ENCODE measurements at regions of chr13 and their contacts with region 1.

Region 1: DNA sequence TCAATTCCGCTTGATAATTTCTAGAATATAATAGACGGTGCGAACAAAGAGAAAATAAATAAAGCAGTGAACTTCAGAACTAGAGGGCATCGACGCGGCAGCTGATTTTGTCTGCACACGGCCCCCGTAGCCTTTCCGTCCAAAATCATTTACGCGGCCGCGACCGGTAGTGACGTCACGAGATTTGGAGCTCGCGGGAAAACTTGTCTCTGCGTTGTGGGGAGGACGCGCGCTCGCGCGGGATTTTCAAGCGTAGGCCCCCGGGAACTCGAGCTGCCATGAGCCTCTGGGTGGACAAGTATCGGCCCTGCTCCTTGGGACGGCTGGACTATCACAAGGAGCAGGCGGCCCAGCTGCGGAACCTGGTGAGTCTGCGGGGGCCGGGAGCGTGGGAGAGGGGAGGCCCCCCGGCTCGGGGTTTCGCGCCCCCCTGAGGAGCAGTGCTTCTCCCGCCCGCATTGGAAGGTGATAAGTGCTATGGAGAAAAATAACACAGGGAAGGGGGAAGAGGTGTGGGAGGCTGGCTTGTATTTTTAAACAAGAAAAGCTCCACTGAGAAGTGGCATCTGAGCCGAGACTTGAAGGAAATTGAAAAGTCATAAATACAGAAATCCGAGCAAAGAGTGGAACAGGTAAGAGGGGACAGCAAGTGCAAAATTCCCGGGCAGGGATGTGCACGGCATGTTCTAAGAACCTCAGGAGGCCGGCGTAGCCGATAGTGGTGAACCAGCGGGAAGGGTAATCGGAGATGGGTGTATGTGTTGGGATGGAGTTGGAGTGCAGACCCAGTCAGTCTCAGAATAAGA is at the start of gene RFC3:
- DNase-seq: peak; percentile 98
- H3K4me3 Mint-ChIP-seq: peak within 1 kb of the TSS; percentile 93
- H3K27ac Mint-ChIP-seq: peak within 1 kb of the TSS; percentile 95
- H3K4me1 Mint-ChIP-seq: peaks cover 30% of the 10 kb centered on the region
- H3K27me3 Mint-ChIP-seq: no peaks in the 10 kb centered on the region
- total RNA-seq, gene RFC3: 77.8 and 81.0 TPM in 2 replicates

Region 2: GRCh38 chr13:32538621-32539246 is 1279.4 kb before region 1 on chr13 and contains the start of gene N4BP2L2:
- intact Hi-C with region 1: loop called (anchors 10 kb)
- DNase-seq: peak; percentile 97
- H3K4me3 Mint-ChIP-seq: peak within 1 kb of the TSS; percentile 98
- H3K27ac Mint-ChIP-seq: peak within 1 kb of the TSS; percentile 99
- H3K4me1 Mint-ChIP-seq: peaks cover 37% of the 10 kb centered on the region
- H3K27me3 Mint-ChIP-seq: peaks cover 8% of the 10 kb centered on the region
- total RNA-seq, gene N4BP2L2: 87.5 and 88.0 TPM in 2 replicates

Region 3: GRCh38 chr13:33743438-33744368 is 74.4 kb before region 1 on chr13:
- intact Hi-C with region 1: loop called (anchors 1 kb)
- DNase-seq: peak; percentile 70
- H3K4me3 Mint-ChIP-seq: peak overlapping the region; percentile 38
- H3K27ac Mint-ChIP-seq: peak overlapping the region; percentile 83
- H3K4me1 Mint-ChIP-seq: peaks cover 22% of the 10 kb centered on the region
- H3K27me3 Mint-ChIP-seq: no peaks in the 10 kb centered on the region

Region 4: GRCh38 chr13:33828431-33829129 is 10.5 kb after region 1 on chr13:
- intact Hi-C with region 1: loop called (anchors 1 kb)
- DNase-seq: no peak
- H3K4me3 Mint-ChIP-seq: no peak overlapping the region
- H3K27ac Mint-ChIP-seq: peak overlapping the region; percentile 35
- H3K4me1 Mint-ChIP-seq: peaks cover 21% of the 10 kb centered on the region
- H3K27me3 Mint-ChIP-seq: no peaks in the 10 kb centered on the region

Region 5: DNA sequence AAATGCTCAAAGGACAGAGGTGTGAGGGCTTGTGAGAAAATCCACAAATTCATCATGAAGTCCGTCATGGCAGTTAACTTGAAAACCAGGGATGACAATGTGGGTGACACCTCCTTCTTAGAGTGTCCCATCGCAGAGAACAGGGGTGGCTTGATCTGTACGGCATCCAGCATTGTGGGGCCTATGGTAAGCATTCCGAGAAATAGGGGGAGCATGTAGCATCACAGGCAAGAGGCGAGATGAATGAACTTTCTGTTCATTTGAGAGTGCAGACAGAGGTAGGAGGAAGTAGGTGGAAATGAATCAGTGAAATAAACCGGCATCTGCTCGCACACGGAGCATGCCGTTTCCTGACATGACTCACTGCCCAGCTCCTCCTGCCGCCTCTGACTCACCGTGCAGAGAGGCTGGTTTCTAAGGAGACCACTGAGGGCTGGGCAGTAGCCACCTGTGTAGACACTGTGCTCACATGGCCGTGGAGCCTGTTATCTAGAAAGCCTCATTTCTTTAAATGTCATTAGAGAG is 338.8 kb after region 1 on chr13:
- intact Hi-C with region 1: loop called (anchors 5 kb)
- DNase-seq: peak; percentile 84
- H3K4me3 Mint-ChIP-seq: peak overlapping the region; percentile 71
- H3K27ac Mint-ChIP-seq: peak overlapping the region; percentile 85
- H3K4me1 Mint-ChIP-seq: peaks cover 19% of the 10 kb centered on the region
- H3K27me3 Mint-ChIP-seq: peaks cover 17% of the 10 kb centered on the region

Region 6: GRCh38 chr13:34555988-34556387 is 737.9 kb after region 1 on chr13:
- intact Hi-C with region 1: no loop called
- DNase-seq: no peak
- H3K4me3 Mint-ChIP-seq: no peak overlapping the region
- H3K27ac Mint-ChIP-seq: no peak overlapping the region
- H3K4me1 Mint-ChIP-seq: no peaks in the 10 kb centered on the region
- H3K27me3 Mint-ChIP-seq: no peaks in the 10 kb centered on the region

Measured in activated CD4-positive, alpha-beta T cell treated with anti-CD3 and anti-CD28 coated beads, Interleukin-2, amount 10 ng/mL, durations not matched to agents 24 days and 14 days (primary cell).